ENCODE measurements at regions of chr17 and their contacts with region 1.

Region 1: DNA sequence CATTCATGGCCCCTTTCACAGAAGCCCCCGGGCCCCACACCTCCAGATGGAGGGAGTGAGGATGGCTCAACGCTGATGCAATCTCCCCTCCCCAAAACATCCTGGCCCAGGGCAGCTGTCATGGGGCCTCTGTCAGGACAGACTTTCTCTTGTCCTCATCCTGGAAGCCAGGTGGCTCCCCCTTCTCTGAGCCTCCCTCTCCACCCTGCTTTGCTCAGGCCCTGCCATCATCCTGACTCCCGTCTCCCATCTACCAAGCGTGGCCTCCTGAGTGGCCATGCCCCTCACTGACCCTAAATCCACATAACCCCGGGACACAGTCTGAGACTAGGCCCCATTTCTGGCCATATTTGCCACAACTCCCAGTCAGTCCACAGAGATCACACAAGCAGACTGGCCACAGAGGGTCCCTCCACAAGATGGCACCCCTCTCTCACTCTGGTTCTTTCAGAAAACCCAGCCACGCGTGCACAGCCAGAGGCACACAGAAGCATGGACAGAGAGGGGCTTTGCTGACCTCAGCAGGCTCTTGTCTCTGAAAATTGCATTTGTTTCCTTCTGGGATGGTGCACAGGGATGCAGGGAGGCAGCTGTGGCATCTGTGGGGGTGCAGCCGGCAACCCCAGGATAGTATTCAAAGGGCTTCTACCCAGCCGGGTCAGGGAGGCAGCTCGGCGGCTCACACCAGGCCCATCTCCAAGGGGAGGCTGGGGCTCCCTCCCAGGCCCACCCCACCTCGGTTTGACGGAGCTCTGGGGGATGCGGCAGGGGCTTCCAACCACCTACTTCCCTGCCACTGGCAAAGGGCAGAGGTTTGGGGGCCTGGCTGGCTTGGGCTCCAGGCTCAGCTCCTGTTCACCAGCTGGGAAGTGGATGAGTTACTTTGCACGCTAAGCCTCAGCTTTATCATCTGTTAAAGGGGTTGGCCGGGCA is 16.9 kb downstream of the DOC2B start:
- DNase-seq: peak; percentile 61 to 65
- ATAC-seq: peak; percentile 68 to 88
- H3K4me3 ChIP-seq: no peak overlapping the region
- H3K27ac ChIP-seq: peak overlapping the region; percentile 41 to 43; a peak in 3 of 6 replicates
- H3K4me1 ChIP-seq: no peaks in the 10 kb centered on the region
- CTCF ChIP-seq: peak; percentile 51
- EP300 ChIP-seq: no peak
- POLR2A ChIP-seq: no peak
- RAD21 ChIP-seq: peak; percentile 79 to 87

Region 2: GRCh38 chr17:143782-144281 is 20.7 kb before region 1 on chr17:
- CTCF ChIA-PET with region 1: interaction called, 16 read pairs
- POLR2A ChIA-PET with region 1: no interaction called
- DNase-seq: peak; percentile 85 to 92
- ATAC-seq: peak; percentile 79 to 89
- H3K4me3 ChIP-seq: no peak overlapping the region
- H3K27ac ChIP-seq: no peak overlapping the region
- H3K4me1 ChIP-seq: 0 out of 3 replicates have a peak, but pooled peaks cover 4% of the 10 kb centered on the region
- CTCF ChIP-seq: peak; percentile 95
- EP300 ChIP-seq: no peak
- POLR2A ChIP-seq: no peak
- RAD21 ChIP-seq: peak; percentile 80 to 98

Region 3: GRCh38 chr17:151886-152859 is 12.4 kb before region 1 on chr17:
- CTCF ChIA-PET with region 1: interaction called, 18 read pairs
- POLR2A ChIA-PET with region 1: no interaction called
- DNase-seq: peak in 1 of 2 experiments; percentile 33
- ATAC-seq: no peak; a peak in 1 of 6 replicates
- H3K4me3 ChIP-seq: no peak overlapping the region
- H3K27ac ChIP-seq: no peak overlapping the region
- H3K4me1 ChIP-seq: peaks cover 5% of the 10 kb centered on the region; the same call in 1 of the 3 replicates
- CTCF ChIP-seq: no peak
- EP300 ChIP-seq: no peak
- POLR2A ChIP-seq: no peak
- RAD21 ChIP-seq: no peak

Region 4: GRCh38 chr17:208429-208828 is 43.9 kb after region 1 on chr17:
- CTCF ChIA-PET with region 1: no interaction called
- POLR2A ChIA-PET with region 1: no interaction called
- DNase-seq: no peak
- ATAC-seq: no peak
- H3K4me3 ChIP-seq: no peak overlapping the region
- H3K27ac ChIP-seq: no peak overlapping the region
- H3K4me1 ChIP-seq: no peaks in the 10 kb centered on the region
- CTCF ChIP-seq: no peak
- EP300 ChIP-seq: no peak
- POLR2A ChIP-seq: no peak
- RAD21 ChIP-seq: no peak

Region 5: GRCh38 chr17:218442-219110 is 54.0 kb after region 1 on chr17:
- CTCF ChIA-PET with region 1: no interaction called
- POLR2A ChIA-PET with region 1: no interaction called
- DNase-seq: no peak
- ATAC-seq: no peak
- H3K4me3 ChIP-seq: no peak overlapping the region
- H3K27ac ChIP-seq: no peak overlapping the region
- H3K4me1 ChIP-seq: peaks cover 15% of the 10 kb centered on the region
- CTCF ChIP-seq: no peak
- EP300 ChIP-seq: no peak
- POLR2A ChIP-seq: no peak
- RAD21 ChIP-seq: no peak

Region 6: DNA sequence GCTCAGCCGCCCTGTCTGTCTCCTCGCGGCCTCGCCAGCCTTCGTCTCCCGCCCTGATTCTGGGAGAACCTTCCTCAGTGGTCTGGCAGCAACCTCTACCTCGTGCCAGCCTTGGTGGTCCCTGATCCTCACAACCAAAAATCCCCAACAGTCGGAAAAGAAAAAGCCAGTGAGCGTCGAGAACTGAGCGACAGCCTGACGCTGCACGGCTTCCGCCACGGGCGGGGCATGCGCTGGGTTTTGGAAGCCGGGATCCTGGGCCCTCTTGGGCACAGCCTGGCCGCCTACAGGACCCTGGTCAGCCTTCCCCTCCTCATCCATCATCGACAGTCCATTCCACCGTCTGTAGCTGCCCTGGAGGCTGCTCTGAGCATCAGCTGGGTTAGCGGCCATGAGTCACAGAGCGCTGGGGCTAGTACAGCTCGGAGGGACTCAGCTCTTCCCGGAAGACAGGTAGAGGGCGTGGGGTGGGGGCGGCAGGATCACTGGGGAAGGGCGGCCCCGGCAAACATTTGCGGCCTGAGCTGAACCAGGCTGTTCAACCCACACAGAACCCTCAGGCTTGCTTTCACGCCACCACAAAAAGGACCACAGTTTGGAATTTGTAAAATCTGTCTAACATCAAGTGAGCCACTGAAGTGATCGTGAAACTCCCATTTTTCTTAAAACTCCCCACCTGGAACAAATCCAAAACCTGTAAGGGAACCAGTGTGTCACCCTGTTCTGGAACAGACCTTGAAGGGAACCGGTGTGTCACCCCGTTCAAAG is 72.3 kb after region 1 on chr17:
- CTCF ChIA-PET with region 1: no interaction called
- POLR2A ChIA-PET with region 1: no interaction called
- DNase-seq: no peak
- ATAC-seq: peak in 1 of 2 experiments; percentile 16; a peak in 1 of 6 replicates
- H3K4me3 ChIP-seq: no peak overlapping the region
- H3K27ac ChIP-seq: no peak overlapping the region
- H3K4me1 ChIP-seq: no peaks in the 10 kb centered on the region
- CTCF ChIP-seq: no peak
- EP300 ChIP-seq: no peak
- POLR2A ChIP-seq: no peak
- RAD21 ChIP-seq: no peak